Prostate gland (tissue), 2 donors: ENCODE measurements at regions of chr4 and their contacts with region 1.

Region 1: DNA sequence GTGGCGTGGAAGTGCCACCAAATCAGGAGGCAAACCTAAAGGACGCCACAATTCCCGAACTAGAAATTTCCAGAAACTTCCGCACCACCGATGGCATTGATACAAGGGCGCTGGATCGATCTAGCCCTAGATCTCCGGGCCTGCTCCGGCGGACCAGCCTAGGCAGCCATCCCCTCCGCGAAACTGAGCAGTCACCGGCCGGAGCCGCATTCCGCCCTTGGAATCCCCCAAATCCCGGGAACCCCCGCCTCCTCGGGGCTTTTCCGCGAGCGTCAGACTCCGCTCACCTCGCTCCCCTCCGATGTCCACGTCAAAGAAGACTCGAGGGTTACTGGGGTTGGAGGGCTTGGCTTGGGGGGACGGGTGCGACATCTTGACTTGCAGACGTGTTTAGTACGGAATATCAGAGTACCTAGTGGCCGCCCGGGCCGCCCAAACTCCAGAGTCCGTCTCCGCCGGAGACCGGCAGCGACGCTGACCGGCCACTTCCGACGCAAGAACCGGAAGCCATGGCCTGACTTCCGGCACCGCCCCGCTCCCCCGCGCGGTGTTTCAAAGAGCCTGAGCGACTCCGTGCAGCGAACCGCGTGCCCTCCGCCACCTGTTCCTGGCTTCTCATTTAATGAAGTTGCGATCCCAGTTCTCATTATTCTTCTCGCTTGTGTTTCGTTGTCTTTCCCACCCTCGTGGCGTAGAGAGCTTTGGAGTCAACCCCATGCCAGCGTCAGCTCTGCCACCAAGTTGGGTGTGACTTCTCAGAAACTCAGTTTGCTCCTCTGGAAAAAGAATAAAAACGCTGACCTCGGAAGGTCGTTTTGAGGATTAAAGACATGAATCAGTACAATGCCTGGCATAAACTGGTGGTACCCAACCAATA is at the start of gene PPID:
- DNase-seq: peak; percentile 77
- H3K4me3 ChIP-seq: peak within 1 kb of the TSS; percentile 83
- H3K27ac ChIP-seq: peak within 1 kb of the TSS; percentile 95
- H3K4me1 ChIP-seq: no peaks in the 10 kb centered on the region
- H3K27me3 ChIP-seq: no peaks in the 10 kb centered on the region
- CTCF ChIP-seq: no peak
- POLR2A ChIP-seq: peak; percentile 60
- total RNA-seq, gene PPID: 20.9 to 23.9 TPM

Region 2: DNA sequence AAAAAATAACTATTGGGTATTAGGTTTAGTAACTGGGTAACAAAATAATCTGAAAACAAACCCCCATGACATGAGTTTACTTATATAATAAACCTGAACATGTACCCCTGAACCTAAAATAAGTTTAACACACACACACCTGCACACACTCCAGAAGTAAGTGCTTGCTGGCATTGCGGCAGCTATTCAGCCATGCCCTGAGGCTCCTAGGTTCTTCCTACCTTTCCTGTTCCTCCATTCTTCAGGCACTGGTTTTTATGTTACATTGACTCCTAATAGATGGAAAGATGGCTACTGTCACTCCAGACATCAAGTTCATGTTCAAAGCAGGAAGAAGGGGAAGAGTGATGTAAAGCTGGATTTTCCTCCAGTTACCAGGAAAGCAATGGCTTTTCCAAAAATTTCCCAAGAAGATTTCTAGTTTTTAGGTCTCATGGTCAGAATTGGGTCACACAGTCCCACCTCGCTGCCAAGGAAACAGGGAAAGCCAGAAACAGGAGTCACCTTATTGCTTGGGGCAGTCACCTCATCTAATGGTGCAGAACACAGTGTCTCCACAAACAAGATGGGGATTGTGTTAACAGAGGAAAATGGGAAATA is 180.1 kb before region 1 on chr4:
- intact Hi-C with region 1: no loop called
- DNase-seq: no peak
- H3K4me3 ChIP-seq: no peak overlapping the region
- H3K27ac ChIP-seq: no peak overlapping the region
- H3K4me1 ChIP-seq: no peaks in the 10 kb centered on the region
- H3K27me3 ChIP-seq: no peaks in the 10 kb centered on the region
- CTCF ChIP-seq: no peak
- POLR2A ChIP-seq: no peak

Region 3: GRCh38 chr4:158671915-158672806 is 51.0 kb before region 1 on chr4 and contains the start of gene ETFDH:
- intact Hi-C with region 1: loop called (anchors 5 kb)
- DNase-seq: peak; percentile 97
- H3K4me3 ChIP-seq: peak within 1 kb of the TSS; percentile 55 to 72
- H3K27ac ChIP-seq: peak within 1 kb of the TSS; percentile 90 to 95
- H3K4me1 ChIP-seq: no peaks in the 10 kb centered on the region
- H3K27me3 ChIP-seq: no peaks in the 10 kb centered on the region
- CTCF ChIP-seq: peak; percentile 10 to 74 (median 52)
- POLR2A ChIP-seq: peak; percentile 91
- total RNA-seq, gene ETFDH: 19.9 to 22.9 TPM

Region 4: GRCh38 chr4:158768555-158769174 is 45.5 kb after region 1 on chr4 and contains the start of gene FNIP2:
- intact Hi-C with region 1: loop called (anchors 2 kb)
- DNase-seq: peak; percentile 72
- H3K4me3 ChIP-seq: peak within 1 kb of the TSS; percentile 56 to 79
- H3K27ac ChIP-seq: peak within 1 kb of the TSS; percentile 76 to 84
- H3K4me1 ChIP-seq: no peaks in the 10 kb centered on the region
- H3K27me3 ChIP-seq: no peaks in the 10 kb centered on the region
- CTCF ChIP-seq: no peak
- POLR2A ChIP-seq: peak; percentile 53
- total RNA-seq, gene FNIP2: 31.1 to 39.8 TPM

Region 5: GRCh38 chr4:159027535-159027934 is 304.4 kb after region 1 on chr4:
- intact Hi-C with region 1: no loop called
- DNase-seq: no peak
- H3K4me3 ChIP-seq: no peak overlapping the region
- H3K27ac ChIP-seq: no peak overlapping the region
- H3K4me1 ChIP-seq: no peaks in the 10 kb centered on the region
- H3K27me3 ChIP-seq: no peaks in the 10 kb centered on the region
- CTCF ChIP-seq: no peak
- POLR2A ChIP-seq: no peak

Region 6: GRCh38 chr4:159175085-159175988 is 452.2 kb after region 1 on chr4:
- intact Hi-C with region 1: loop called (anchors 5 kb)
- DNase-seq: peak; percentile 73
- H3K4me3 ChIP-seq: no peak overlapping the region
- H3K27ac ChIP-seq: no peak overlapping the region
- H3K4me1 ChIP-seq: no peaks in the 10 kb centered on the region
- H3K27me3 ChIP-seq: no peaks in the 10 kb centered on the region
- CTCF ChIP-seq: peak; percentile 49 to 87 (median 83)
- POLR2A ChIP-seq: no peak

Region 7: GRCh38 chr4:159206427-159206871 is 483.3 kb after region 1 on chr4:
- intact Hi-C with region 1: loop called (anchors 10 kb)
- DNase-seq: no peak
- H3K4me3 ChIP-seq: no peak overlapping the region
- H3K27ac ChIP-seq: no peak overlapping the region
- H3K4me1 ChIP-seq: peaks cover 10% of the 10 kb centered on the region
- H3K27me3 ChIP-seq: no peaks in the 10 kb centered on the region
- CTCF ChIP-seq: no peak
- POLR2A ChIP-seq: no peak